ENCODE measurements at regions of chr12 and their contacts with region 1.

Region 1: DNA sequence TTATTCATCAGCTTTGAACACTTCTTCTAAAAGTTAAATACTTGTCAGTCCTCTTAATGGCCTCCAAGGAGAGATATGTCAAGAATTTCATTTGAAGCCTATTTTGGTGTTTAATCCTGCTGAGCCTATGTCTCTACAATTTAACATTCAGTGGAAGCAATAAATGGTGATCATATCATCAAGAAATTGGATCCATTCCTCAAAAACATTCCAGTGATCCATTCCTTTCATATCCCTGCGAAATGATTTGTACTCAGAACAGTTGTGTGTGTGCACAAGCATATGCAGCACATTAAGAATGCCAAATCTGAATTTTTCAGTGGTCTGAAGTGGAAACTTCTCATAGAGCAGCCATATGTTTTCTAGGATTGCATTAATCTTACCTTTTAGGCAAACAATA is 373.7 kb upstream of the SYT1 start:
- DNase-seq: no peak
- H3K4me3 ChIP-seq: no peak overlapping the region
- H3K4me3 Mint-ChIP-seq: no peak overlapping the region
- H3K27ac Mint-ChIP-seq: no peak overlapping the region
- H3K4me1 ChIP-seq: no peaks in the 10 kb centered on the region
- H3K4me1 Mint-ChIP-seq: no peaks in the 10 kb centered on the region
- H3K27me3 ChIP-seq: no peaks in the 10 kb centered on the region
- H3K27me3 Mint-ChIP-seq: peaks cover 4% of the 10 kb centered on the region
- CTCF ChIP-seq: no peak

Region 2: DNA sequence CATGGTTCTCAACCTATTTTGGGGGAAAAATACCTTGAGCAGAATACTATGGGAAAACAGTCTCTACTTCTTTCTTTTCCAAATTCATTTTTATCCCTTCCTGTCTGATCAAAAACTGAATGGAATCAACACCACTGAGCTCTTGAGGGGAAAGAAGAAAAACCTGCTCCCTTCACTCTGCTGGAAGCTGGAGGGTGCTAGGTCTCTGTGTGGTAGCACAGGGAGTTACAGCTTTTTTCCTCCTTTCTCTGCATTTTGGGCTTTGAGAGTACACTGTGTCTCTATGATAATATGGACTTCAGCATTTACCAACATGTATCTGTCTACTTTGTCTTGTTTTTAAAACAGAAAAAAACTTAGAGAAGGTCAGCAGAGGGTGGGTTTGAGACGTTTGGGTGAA is 43.5 kb before region 1 on chr12:
- CTCF ChIA-PET with region 1: no interaction called
- POLR2A ChIA-PET with region 1: no interaction called
- intact Hi-C with region 1: loop called (anchors 1 kb)
- DNase-seq: no peak
- H3K4me3 ChIP-seq: no peak overlapping the region
- H3K4me3 Mint-ChIP-seq: no peak overlapping the region
- H3K27ac Mint-ChIP-seq: no peak overlapping the region
- H3K4me1 ChIP-seq: no peaks in the 10 kb centered on the region
- H3K4me1 Mint-ChIP-seq: no peaks in the 10 kb centered on the region
- H3K27me3 ChIP-seq: no peaks in the 10 kb centered on the region; the same call in 1 of the 2 replicates
- H3K27me3 Mint-ChIP-seq: peaks cover 5% of the 10 kb centered on the region
- CTCF ChIP-seq: no peak